ENCODE measurements at regions of chr20 and their contacts with region 1.

Region 1: GRCh38 chr20:20138301-20139064 is 86.2 kb downstream of the CFAP61 start:
- DNase-seq: no peak
- H3K4me3 ChIP-seq: no peak overlapping the region
- H3K27ac ChIP-seq: no peak overlapping the region
- H3K4me1 ChIP-seq: no peaks in the 10 kb centered on the region
- H3K27me3 ChIP-seq: no peaks in the 10 kb centered on the region
- CTCF ChIP-seq: no peak

Region 2: GRCh38 chr20:20237093-20237959 is 98.8 kb after region 1 on chr20:
- intact Hi-C with region 1: loop called (anchors 5 kb)
- DNase-seq: peak in 1 of 2 donors; percentile 66
- H3K4me3 ChIP-seq: no peak overlapping the region
- H3K27ac ChIP-seq: no peak overlapping the region
- H3K4me1 ChIP-seq: no peaks in the 10 kb centered on the region
- H3K27me3 ChIP-seq: no peaks in the 10 kb centered on the region
- CTCF ChIP-seq: peak; percentile 41 to 64 (median 58)